Thyroid gland (tissue), 4 donors: ENCODE measurements at regions of chr7 and their contacts with region 1.

Region 1: DNA sequence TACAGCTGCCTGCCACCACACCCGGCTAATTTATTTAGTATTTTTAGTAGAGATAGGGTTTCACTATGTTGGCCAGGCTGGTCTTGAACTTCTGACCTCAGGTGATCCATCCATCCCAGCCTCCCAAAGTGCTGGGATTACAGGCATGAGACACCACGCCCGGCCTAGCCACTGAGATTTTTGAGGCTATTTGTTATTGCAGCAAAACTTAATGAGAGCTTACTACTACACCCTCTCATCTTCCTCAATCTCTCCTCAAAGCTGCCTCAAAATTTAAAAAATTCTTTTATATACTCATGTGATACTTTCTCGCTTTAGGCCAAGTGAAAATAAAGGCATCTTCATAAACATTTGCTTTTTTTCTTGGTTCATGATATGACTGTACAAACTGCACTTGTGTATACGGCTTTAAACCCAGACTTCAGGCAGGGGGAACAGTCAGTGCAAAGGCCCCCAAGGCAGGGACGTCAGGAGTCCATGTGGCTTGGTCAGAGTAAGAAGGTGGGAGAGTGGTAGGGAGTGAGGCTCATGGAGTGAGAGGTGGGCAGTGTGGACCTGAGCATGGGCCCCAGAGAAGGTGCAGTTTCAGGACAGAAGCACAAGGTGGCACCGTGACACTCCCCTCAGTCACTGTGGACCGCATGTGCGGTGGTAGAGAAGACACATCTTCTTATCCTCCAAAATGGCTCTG is 55.5 kb downstream of the SYPL1 start:
- DNase-seq: peak; percentile 74 to 81
- H3K4me3 ChIP-seq: no peak overlapping the region
- H3K27ac ChIP-seq: no peak overlapping the region
- H3K4me1 ChIP-seq: peaks cover 18 to 22% of the 10 kb centered on the region in 2 donors
- H3K27me3 ChIP-seq: no peaks in the 10 kb centered on the region
- CTCF ChIP-seq: peak; percentile 64 to 96 (median 88)
- POLR2A ChIP-seq: no peak

Region 2: GRCh38 chr7:105830391-105831301 is 226.0 kb before region 1 on chr7:
- intact Hi-C with region 1: no loop called
- DNase-seq: no peak
- H3K4me3 ChIP-seq: no peak overlapping the region
- H3K27ac ChIP-seq: no peak overlapping the region
- H3K4me1 ChIP-seq: peaks cover 13 to 16% of the 10 kb centered on the region in 2 donors
- H3K27me3 ChIP-seq: no peaks in the 10 kb centered on the region
- CTCF ChIP-seq: no peak
- POLR2A ChIP-seq: no peak

Region 3: DNA sequence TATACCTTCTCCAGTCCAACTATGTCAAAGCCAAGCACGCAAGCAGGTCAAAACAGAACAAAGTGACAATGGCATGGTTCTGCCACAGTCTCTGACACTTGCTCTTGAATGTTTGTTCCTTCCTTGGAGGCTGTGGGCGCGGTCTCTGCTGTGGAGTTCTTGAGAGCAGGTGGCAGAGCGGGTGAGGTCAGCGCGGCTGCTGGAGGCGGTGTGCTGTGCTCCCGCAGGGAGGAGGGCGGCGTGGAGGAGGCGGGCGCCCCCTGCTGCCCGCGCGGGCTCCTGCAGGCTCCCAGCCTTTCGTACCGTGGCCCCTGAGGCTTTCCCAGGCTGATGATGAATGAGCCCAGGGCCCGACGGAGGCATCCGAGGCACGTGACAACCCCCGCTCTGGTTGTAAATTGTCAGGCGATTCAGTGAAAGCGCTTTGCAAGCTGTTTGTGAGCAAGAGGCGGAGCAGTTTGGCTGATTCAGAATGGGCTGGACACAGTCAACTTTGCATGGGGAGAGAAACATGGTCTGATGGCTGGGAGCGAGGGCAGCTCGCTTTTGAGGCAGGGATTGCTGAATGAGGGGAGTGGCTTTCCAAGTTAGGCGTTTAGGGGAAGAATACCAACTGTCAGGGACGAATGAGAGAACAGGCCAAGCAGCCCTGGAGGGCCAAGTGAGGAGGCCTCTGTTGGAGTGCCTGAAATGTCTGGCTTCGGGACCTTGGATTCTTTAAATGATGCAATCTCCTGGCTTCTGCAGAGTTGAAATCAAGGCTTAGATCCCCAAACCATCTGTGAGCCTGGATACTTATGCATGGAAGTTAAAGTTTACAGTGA is 47.0 kb before region 1 on chr7:
- intact Hi-C with region 1: no loop called
- DNase-seq: peak; percentile 84 to 85
- H3K4me3 ChIP-seq: no peak overlapping the region
- H3K27ac ChIP-seq: no peak overlapping the region
- H3K4me1 ChIP-seq: peaks cover 16 to 17% of the 10 kb centered on the region in 2 donors
- H3K27me3 ChIP-seq: no peaks in the 10 kb centered on the region
- CTCF ChIP-seq: peak; percentile 72 to 94 (median 91)
- POLR2A ChIP-seq: no peak

Region 4: GRCh38 chr7:106112117-106112971 is 55.7 kb after region 1 on chr7 and contains the start of gene SYPL1:
- intact Hi-C with region 1: loop called (anchors 10 kb)
- DNase-seq: peak; percentile 94
- H3K4me3 ChIP-seq: peak within 1 kb of the TSS; percentile 43 to 83 (median 69)
- H3K27ac ChIP-seq: peak within 1 kb of the TSS; percentile 98 to 99 (median 99)
- H3K4me1 ChIP-seq: peaks cover 15 to 22% of the 10 kb centered on the region in 2 donors
- H3K27me3 ChIP-seq: no peaks in the 10 kb centered on the region
- CTCF ChIP-seq: peak in 1 of 6 experiments; percentile 10
- POLR2A ChIP-seq: peak; percentile 86 to 92
- total RNA-seq, gene SYPL1: 119 to 165 (median 132) TPM

Region 5: GRCh38 chr7:106153891-106154449 is 97.3 kb after region 1 on chr7:
- intact Hi-C with region 1: loop called (anchors 2 kb)
- DNase-seq: peak; percentile 89 to 91
- H3K4me3 ChIP-seq: no peak overlapping the region
- H3K27ac ChIP-seq: peak overlapping the region in 1 of 3 donors; percentile 28
- H3K4me1 ChIP-seq: peaks cover 0 to 18% of the 10 kb centered on the region in 2 donors
- H3K27me3 ChIP-seq: no peaks in the 10 kb centered on the region
- CTCF ChIP-seq: peak; percentile 84 to 98 (median 97)
- POLR2A ChIP-seq: no peak